ENCODE measurements at regions of chr19 and their contacts with region 1.

Region 1: GRCh38 chr19:34428549-34429285 is 536 bp downstream of the UBA2 start:
- DNase-seq: peak; percentile 52 to 66
- ATAC-seq: peak; percentile 75 to 76
- H3K4me3 ChIP-seq: peak overlapping the region; percentile 78
- H3K27ac ChIP-seq: peak overlapping the region; percentile 93 to 94
- H3K4me1 ChIP-seq: peaks cover 24% of the 10 kb centered on the region
- CTCF ChIP-seq: no peak; the same call in 2 of the 3 replicates
- EP300 ChIP-seq: no peak
- POLR2A ChIP-seq: no peak
- RAD21 ChIP-seq: no peak

Region 2: GRCh38 chr19:34332027-34332760 is 96.5 kb before region 1 on chr19:
- CTCF ChIA-PET with region 1: no interaction called
- POLR2A ChIA-PET with region 1: no interaction called
- DNase-seq: no peak
- ATAC-seq: no peak
- H3K4me3 ChIP-seq: no peak overlapping the region
- H3K27ac ChIP-seq: no peak overlapping the region
- H3K4me1 ChIP-seq: peaks cover 5% of the 10 kb centered on the region; the same call in 2 of the 3 replicates
- CTCF ChIP-seq: no peak
- EP300 ChIP-seq: no peak
- POLR2A ChIP-seq: no peak
- RAD21 ChIP-seq: no peak

Region 3: DNA sequence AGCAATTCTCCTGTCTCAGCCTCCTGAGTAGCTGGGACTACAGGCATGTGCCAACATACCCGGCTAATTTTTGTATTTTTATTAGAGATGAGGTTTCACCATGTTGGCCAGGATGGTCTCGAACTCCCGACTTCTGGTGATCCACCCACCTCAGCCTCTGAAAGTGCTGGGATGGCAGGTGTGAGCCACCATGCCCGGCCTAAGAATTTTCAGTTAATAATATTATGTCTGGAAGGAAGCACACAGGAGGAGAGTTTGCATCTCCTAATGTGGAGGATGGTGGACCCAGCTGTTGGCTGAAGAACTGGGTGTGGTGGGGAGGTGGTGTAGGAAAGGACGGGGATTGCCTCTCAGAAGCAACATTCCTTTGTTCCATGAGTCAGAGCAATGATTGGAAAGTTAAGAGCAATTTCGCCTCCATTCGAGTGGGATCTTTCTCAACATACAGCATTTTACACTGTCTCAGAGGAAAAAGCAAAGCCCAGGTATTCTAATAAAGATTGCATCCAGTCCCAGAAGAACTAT is 12.6 kb before region 1 on chr19:
- CTCF ChIA-PET with region 1: interaction called, 18 read pairs
- POLR2A ChIA-PET with region 1: interaction called, 6 read pairs
- DNase-seq: no peak
- ATAC-seq: 0 out of 6 replicates have a peak, but pooled peaks of 1 of the 2 experiments have one; percentile 24
- H3K4me3 ChIP-seq: no peak overlapping the region
- H3K27ac ChIP-seq: no peak overlapping the region
- H3K4me1 ChIP-seq: no peaks in the 10 kb centered on the region
- CTCF ChIP-seq: no peak
- EP300 ChIP-seq: no peak
- POLR2A ChIP-seq: no peak
- RAD21 ChIP-seq: no peak

Region 4: DNA sequence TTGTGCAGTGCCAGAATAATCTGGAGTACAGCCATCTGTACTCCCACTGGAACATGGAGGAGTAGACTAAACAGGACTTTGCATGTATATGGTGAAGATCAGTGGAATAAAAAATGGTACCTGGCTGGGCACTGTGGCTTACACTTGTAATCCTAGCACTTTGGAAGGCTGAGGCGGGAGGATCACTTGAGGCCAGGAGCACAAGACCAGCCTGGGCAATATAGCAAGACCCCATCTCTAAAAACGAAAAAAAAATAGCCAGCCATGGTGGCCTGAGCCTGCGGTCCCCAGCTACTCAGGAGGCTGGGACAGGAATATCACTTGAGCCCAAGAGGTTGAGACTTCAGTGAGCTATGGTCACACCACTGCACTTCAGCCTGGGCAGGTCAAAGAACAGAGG is 19.5 kb after region 1 on chr19:
- CTCF ChIA-PET with region 1: interaction called, 12 read pairs
- POLR2A ChIA-PET with region 1: interaction called, 4 read pairs
- DNase-seq: no peak
- ATAC-seq: no peak; a peak in 1 of 6 replicates
- H3K4me3 ChIP-seq: no peak overlapping the region
- H3K27ac ChIP-seq: no peak overlapping the region
- H3K4me1 ChIP-seq: no peaks in the 10 kb centered on the region
- CTCF ChIP-seq: no peak
- EP300 ChIP-seq: no peak
- POLR2A ChIP-seq: no peak
- RAD21 ChIP-seq: no peak

Region 5: DNA sequence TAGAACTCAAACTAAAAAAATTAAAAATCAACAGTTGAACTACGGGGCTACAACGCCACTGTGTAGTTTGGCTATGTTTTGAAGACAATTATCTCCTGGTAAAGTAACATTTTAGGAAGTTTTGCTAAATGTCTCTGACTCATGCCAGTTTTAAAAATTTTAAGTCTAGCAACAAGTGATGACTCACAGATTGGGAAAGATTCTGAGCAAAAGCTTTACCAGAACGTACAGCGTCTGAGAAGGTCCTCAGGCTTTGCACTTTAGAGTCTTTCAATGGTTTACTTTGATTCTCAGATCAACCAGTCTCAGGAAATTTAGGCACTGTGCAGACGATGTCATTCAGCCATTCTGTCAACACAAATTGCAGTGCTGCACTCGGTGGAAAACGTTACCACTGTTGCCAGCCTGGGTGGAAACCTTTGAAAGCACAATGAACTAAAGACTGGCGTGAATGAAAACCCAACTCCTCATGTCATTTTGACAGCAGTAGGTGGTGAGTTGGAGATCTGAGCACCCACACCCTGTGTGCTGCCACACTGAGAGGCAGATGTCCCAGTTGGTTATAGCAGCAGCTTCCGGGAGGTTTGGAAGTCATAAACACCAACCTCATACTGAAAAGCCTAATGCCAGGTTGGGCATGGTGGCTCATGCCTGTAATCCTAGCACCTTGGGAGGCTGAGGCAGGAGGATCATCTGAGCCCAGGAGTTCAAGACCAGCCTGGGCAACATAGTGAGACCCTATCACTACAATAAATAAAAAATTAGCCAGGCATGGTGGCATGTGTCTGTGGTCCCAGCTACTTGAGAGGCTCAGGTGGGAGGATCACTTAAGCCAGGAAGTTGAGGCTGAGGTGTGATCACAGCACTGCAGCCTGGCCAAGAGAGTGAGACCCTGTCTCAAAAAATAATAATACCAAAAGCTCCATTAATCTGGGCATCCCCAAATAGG is 46.6 kb after region 1 on chr19:
- CTCF ChIA-PET with region 1: interaction called, 19 read pairs
- POLR2A ChIA-PET with region 1: no interaction called
- DNase-seq: peak in 1 of 2 experiments; percentile 52
- ATAC-seq: peak; percentile 33 to 55
- H3K4me3 ChIP-seq: no peak overlapping the region
- H3K27ac ChIP-seq: peak overlapping the region in 1 of 2 experiments; percentile 40; a peak in 3 of 6 replicates
- H3K4me1 ChIP-seq: peaks cover 19% of the 10 kb centered on the region
- CTCF ChIP-seq: no peak
- EP300 ChIP-seq: no peak
- POLR2A ChIP-seq: no peak
- RAD21 ChIP-seq: no peak

Measured in A549 (cell line).